Gastrocnemius medialis (tissue), 4 donors: ENCODE measurements at regions of chr12 and their contacts with region 1.

Region 1: DNA sequence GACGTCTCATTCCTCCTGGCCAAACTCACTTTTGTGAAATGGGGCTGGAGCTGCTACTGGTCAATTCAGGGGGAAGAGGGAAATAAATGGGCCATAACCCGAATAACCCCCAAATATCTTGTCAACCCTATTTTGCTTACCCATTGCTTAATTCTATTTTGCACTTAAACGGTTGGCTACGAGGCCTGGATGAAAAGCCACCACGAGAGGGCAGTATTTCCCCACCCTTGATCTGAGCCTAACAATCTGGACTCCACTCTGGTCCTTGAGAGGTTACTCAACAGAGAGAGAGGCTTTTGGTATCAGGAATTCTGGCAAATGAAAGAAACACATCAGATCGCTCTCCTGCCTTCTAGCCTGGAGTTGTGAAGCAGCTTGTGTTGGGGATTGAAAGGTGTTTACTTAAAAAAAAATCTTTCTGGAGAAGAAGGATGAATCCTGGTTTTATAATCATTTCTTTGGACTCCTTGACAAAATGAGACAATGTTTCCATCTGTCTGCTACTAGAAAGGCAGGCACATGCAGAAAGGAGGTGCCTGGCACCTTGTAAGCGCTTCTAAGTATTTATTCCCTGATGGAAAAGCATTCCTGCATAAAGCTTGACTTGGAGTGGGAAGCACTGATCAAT is 22.4 kb upstream of the FBXO21 start:
- DNase-seq: peak; percentile 33 to 63
- ATAC-seq: peak; percentile 88 to 89
- H3K4me3 ChIP-seq: no peak overlapping the region
- H3K27ac ChIP-seq: no peak overlapping the region
- H3K4me1 ChIP-seq: peaks cover 0 to under 1% of the 10 kb centered on the region in 2 donors
- H3K27me3 ChIP-seq: no peaks in the 10 kb centered on the region
- CTCF ChIP-seq: peak; percentile 54 to 87 (median 75)
- POLR2A ChIP-seq: no peak

Region 2: GRCh38 chr12:117587631-117588287 is 375.1 kb after region 1 on chr12:
- in situ Hi-C with region 1: loop called in 1 of 4 experiments (anchors 25 kb)
- intact Hi-C with region 1: no loop called
- DNase-seq: peak; percentile 27 to 65
- ATAC-seq: peak; percentile 83 to 91
- H3K4me3 ChIP-seq: peak overlapping the region in 3 of 4 donors; percentile 27 to 33 (median 30)
- H3K27ac ChIP-seq: no peak overlapping the region
- H3K4me1 ChIP-seq: no peaks in the 10 kb centered on the region
- H3K27me3 ChIP-seq: peaks cover 0 to 5% (median 0%) of the 10 kb centered on the region in 3 donors
- CTCF ChIP-seq: peak; percentile 87 to 92 (median 90)
- POLR2A ChIP-seq: no peak

Region 3: GRCh38 chr12:117671734-117672133 is 459.1 kb after region 1 on chr12:
- in situ Hi-C with region 1: loop called in 1 of 4 experiments (anchors 10 kb)
- intact Hi-C with region 1: no loop called
- DNase-seq: peak in 1 of 2 donors; percentile 15
- ATAC-seq: peak in 1 of 2 donors; percentile 33
- H3K4me3 ChIP-seq: no peak overlapping the region
- H3K27ac ChIP-seq: no peak overlapping the region
- H3K4me1 ChIP-seq: no peaks in the 10 kb centered on the region
- H3K27me3 ChIP-seq: no peaks in the 10 kb centered on the region
- CTCF ChIP-seq: peak in 4 of 5 experiments; percentile 22 to 61 (median 44)
- POLR2A ChIP-seq: no peak

Region 4: DNA sequence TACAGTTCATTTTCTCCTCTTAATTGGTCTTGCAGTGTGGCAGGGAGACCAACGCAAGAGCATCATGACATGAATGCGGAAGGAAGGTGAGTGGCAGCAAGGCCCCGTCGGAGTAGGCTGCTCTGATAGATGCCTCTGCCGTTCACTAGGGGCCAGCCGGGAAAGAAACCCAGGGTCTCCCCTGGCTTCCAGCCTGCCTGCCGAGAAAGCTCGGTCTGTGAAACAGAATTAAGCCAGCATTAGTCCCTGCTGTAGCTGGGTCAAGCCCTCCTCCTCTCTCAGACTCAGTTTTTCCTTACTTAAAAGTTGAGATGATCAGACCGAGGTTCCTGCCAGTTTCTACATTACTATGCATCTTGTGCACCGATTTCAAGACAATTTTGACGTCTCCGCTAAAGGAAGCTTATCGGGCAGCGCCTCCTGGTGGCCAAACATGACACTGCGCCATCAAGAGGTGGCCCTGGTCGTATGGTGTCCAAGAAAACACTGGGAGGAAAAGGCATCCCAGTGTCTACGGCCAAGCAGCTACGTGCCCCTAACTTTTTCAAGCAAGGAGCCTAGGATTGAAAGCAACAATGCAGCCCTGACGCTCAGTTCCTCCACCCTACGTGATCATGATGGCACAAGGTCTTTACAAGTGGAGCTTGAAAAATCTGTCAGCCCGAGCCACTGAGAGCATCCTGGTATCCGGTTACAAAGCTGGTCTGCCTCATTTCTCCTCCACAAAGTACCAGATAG is 624.5 kb after region 1 on chr12:
- in situ Hi-C with region 1: loop called in 3 of 4 experiments (anchors 10 kb)
- intact Hi-C with region 1: loop called (anchors 1 kb)
- DNase-seq: peak; percentile 44 to 59
- ATAC-seq: peak; percentile 67 to 74
- H3K4me3 ChIP-seq: no peak overlapping the region
- H3K27ac ChIP-seq: no peak overlapping the region
- H3K4me1 ChIP-seq: no peaks in the 10 kb centered on the region
- H3K27me3 ChIP-seq: peaks cover 0 to 3% (median 0%) of the 10 kb centered on the region in 3 donors
- CTCF ChIP-seq: peak; percentile 85 to 92 (median 90)
- POLR2A ChIP-seq: no peak

Region 5: DNA sequence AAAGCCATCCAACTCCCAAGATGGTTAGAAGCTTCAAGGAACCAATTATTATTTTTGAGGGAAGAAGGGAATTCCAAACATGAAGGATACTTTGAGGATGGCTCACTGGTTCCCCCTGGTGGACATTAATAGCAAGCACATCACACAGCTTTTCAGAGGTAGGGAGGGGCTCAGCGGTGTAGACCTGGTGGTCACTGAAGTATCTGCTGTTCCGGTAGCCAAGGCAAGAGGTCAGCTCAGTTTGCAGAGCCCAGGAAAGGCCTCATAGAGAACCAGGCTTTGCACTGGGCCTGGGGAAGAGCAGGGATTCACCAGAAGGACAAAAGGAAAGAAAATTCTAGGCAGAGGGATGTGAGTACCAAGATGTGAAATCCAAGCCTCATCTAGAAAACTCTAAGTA is 637.4 kb after region 1 on chr12:
- in situ Hi-C with region 1: no loop called
- intact Hi-C with region 1: loop called (anchors 5 kb)
- DNase-seq: no peak
- ATAC-seq: no peak
- H3K4me3 ChIP-seq: no peak overlapping the region
- H3K27ac ChIP-seq: no peak overlapping the region
- H3K4me1 ChIP-seq: no peaks in the 10 kb centered on the region
- H3K27me3 ChIP-seq: peaks cover 0 to 6% (median 3%) of the 10 kb centered on the region in 3 donors
- CTCF ChIP-seq: peak; percentile 36 to 78 (median 62)
- POLR2A ChIP-seq: no peak